ENCODE measurements at regions of chr2 and their contacts with region 1.

Region 1: GRCh38 chr2:1550658-1551316 is 137.5 kb downstream of the TPO start:
- DNase-seq: peak; percentile 16 to 81 (median 60)
- ATAC-seq: peak; percentile 46
- H3K4me3 ChIP-seq: no peak overlapping the region
- H3K4me3 Mint-ChIP-seq: no peak overlapping the region
- H3K27ac ChIP-seq: no peak overlapping the region
- H3K27ac Mint-ChIP-seq: no peak overlapping the region
- H3K4me1 ChIP-seq: peaks cover 11% of the 10 kb centered on the region
- H3K4me1 Mint-ChIP-seq: peaks cover 8% of the 10 kb centered on the region
- H3K27me3 ChIP-seq: peaks cover 2 to 3% of the 10 kb centered on the region in 2 experiments
- H3K27me3 Mint-ChIP-seq: peaks cover 11% of the 10 kb centered on the region
- CTCF ChIP-seq: peak; percentile 93

Region 2: DNA sequence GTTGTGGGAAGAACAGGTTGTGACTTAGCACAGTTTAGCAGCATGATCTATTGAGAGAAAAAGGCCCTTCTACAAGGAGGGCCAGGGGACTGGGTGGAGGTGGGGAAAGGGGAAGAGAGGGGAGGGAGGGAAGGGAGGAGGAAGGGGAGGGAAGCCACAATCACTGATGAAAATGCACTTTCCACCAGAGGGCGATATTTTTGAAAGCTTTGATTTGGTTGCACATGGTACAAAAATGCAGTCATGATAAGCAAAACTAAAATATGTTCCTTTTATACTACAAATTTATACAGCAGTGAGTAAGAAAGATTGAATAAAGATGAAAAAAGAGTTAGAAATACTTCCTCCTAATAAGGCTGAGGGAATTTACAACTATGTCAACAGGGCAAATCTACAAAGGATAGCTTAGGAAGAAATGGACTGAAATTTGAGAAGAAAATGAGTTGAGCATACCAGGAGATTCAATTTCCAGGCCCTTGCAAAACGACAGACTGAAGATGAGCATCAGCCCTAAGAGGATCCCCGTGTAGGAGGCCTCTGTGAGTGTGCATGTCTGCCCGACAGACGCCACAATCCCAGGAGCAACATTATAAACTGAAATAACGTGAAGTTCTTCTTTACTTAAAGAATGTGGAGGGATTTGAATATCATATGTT is 1304.2 kb before region 1 on chr2:
- CTCF ChIA-PET with region 1: interaction called, 3 read pairs
- POLR2A ChIA-PET with region 1: no interaction called
- intact Hi-C with region 1: loop called in 1 of 2 experiments (anchors 5 kb)
- DNase-seq: peak in 3 of 9 experiments; percentile 32 to 73 (median 63)
- ATAC-seq: peak; percentile 38
- H3K4me3 ChIP-seq: no peak overlapping the region
- H3K4me3 Mint-ChIP-seq: no peak overlapping the region
- H3K27ac ChIP-seq: no peak overlapping the region
- H3K27ac Mint-ChIP-seq: no peak overlapping the region
- H3K4me1 ChIP-seq: peaks cover 3% of the 10 kb centered on the region
- H3K4me1 Mint-ChIP-seq: peaks cover 6% of the 10 kb centered on the region
- H3K27me3 ChIP-seq: no peaks in the 10 kb centered on the region
- H3K27me3 Mint-ChIP-seq: no peaks in the 10 kb centered on the region
- CTCF ChIP-seq: peak; percentile 60

Region 3: DNA sequence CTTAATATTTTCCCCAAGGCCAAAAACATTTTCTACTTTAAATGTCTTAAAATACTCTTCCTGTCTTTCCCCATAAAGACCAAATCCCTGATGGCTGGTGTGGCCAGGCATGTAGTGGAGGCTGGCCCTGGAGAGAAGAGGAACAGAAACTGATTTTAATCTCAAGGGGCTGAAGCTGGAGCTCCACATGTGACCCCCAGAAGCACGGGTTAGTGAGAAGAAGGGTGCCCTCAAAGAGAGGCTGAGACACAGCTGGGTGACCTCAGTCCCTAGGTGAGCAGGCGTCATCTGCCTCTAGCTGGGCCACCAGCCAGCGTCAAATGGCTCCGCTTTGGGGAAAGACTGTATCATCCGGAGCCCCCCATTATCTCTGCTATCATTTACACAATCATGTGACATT is 854.3 kb before region 1 on chr2:
- CTCF ChIA-PET with region 1: interaction called, 3 read pairs
- POLR2A ChIA-PET with region 1: no interaction called
- intact Hi-C with region 1: loop called in 1 of 2 experiments (anchors 5 kb)
- DNase-seq: no peak
- ATAC-seq: no peak
- H3K4me3 ChIP-seq: no peak overlapping the region
- H3K4me3 Mint-ChIP-seq: no peak overlapping the region
- H3K27ac ChIP-seq: no peak overlapping the region
- H3K27ac Mint-ChIP-seq: no peak overlapping the region
- H3K4me1 ChIP-seq: no peaks in the 10 kb centered on the region
- H3K4me1 Mint-ChIP-seq: no peaks in the 10 kb centered on the region
- H3K27me3 ChIP-seq: no peaks in the 10 kb centered on the region
- H3K27me3 Mint-ChIP-seq: peaks cover 7% of the 10 kb centered on the region
- CTCF ChIP-seq: no peak

Region 4: GRCh38 chr2:854460-854859 is 696.3 kb before region 1 on chr2:
- CTCF ChIA-PET with region 1: no interaction called
- POLR2A ChIA-PET with region 1: no interaction called
- intact Hi-C with region 1: loop called in 1 of 2 experiments (anchors 5 kb)
- DNase-seq: peak in 3 of 9 experiments; percentile 36 to 58 (median 58)
- ATAC-seq: no peak
- H3K4me3 ChIP-seq: no peak overlapping the region
- H3K4me3 Mint-ChIP-seq: no peak overlapping the region
- H3K27ac ChIP-seq: no peak overlapping the region
- H3K27ac Mint-ChIP-seq: no peak overlapping the region
- H3K4me1 ChIP-seq: peaks cover 10% of the 10 kb centered on the region
- H3K4me1 Mint-ChIP-seq: peaks cover 19% of the 10 kb centered on the region
- H3K27me3 ChIP-seq: no peaks in the 10 kb centered on the region
- H3K27me3 Mint-ChIP-seq: no peaks in the 10 kb centered on the region
- CTCF ChIP-seq: no peak

Region 5: GRCh38 chr2:1561811-1562421 is 11.1 kb after region 1 on chr2:
- CTCF ChIA-PET with region 1: interaction called, 11 read pairs
- POLR2A ChIA-PET with region 1: no interaction called
- intact Hi-C with region 1: no loop called
- DNase-seq: no peak
- ATAC-seq: no peak
- H3K4me3 ChIP-seq: no peak overlapping the region
- H3K4me3 Mint-ChIP-seq: no peak overlapping the region
- H3K27ac ChIP-seq: no peak overlapping the region
- H3K27ac Mint-ChIP-seq: no peak overlapping the region
- H3K4me1 ChIP-seq: peaks cover 18% of the 10 kb centered on the region
- H3K4me1 Mint-ChIP-seq: peaks cover 18% of the 10 kb centered on the region
- H3K27me3 ChIP-seq: peaks cover 0 to 3% of the 10 kb centered on the region in 2 experiments
- H3K27me3 Mint-ChIP-seq: no peaks in the 10 kb centered on the region
- CTCF ChIP-seq: no peak